Mucosa of descending colon (tissue), 3 donors: ENCODE measurements at regions of chr3 and their contacts with region 1.

Region 1: GRCh38 chr3:32947789-32948238 is 3.6 kb upstream of the CCR4 start:
- DNase-seq: peak; percentile 69 to 98 (median 87)
- ATAC-seq: peak; percentile 97
- H3K4me3 ChIP-seq: no peak overlapping the region
- H3K4me1 ChIP-seq: no peaks in the 10 kb centered on the region
- CTCF ChIP-seq: peak; percentile 42

Region 2: DNA sequence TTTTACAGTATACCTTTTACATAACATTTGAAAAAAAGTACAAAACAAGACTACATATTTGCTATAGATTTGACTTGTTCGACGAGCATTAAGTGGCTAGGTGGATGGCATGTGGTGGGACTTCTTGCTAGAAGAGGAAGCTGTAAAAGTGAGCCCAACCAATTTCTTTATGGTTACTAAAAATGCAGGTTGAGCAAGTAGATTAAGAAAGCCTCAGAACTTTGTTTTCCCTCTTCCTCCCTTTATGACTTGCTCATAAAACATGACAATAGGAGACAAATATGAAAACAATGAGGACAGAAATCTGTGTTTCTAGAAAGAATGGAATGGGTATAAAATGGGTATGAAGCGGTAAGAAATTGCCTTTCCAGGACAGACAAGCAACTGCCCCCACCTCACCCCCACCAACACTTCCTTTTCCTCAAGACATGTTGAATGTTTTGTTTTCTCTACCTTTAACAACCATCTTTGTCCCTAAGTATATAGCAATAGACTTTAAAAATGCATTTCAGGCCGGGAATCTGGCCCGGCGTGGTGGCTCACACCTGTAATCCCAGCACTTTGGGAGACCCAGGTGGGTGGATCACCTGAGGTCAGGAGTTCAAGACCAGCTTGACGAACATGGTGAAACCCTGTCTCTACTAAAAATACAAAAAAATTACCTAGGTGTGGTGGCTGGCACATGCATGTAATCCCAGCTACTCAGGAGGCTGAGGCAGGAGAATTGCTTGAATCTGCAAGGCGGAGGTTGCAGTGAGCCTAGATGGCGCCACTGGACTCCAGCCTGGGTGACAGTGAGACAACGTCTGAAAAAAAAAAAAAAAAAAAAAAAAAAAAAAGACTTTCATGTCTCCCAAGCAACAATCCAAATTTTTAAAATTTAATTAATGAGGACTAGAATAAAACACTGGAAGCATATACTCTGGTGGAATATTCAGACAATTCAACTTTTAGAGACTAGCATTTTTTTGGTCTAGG is 46.1 kb before region 1 on chr3:
- intact Hi-C with region 1: no loop called
- DNase-seq: peak in 2 of 3 donors; percentile 56 to 57
- ATAC-seq: no peak
- H3K4me3 ChIP-seq: no peak overlapping the region
- H3K4me1 ChIP-seq: no peaks in the 10 kb centered on the region
- CTCF ChIP-seq: peak; percentile 9

Region 3: GRCh38 chr3:33074217-33075067 is 126.6 kb after region 1 on chr3:
- intact Hi-C with region 1: loop called in 1 of 2 experiments (anchors 2 kb)
- DNase-seq: peak in 2 of 3 donors; percentile 58 to 80
- ATAC-seq: peak; percentile 88
- H3K4me3 ChIP-seq: no peak overlapping the region
- H3K4me1 ChIP-seq: no peaks in the 10 kb centered on the region
- CTCF ChIP-seq: peak; percentile 74